ENCODE measurements at regions of chr12 and their contacts with region 1.

Region 1: DNA sequence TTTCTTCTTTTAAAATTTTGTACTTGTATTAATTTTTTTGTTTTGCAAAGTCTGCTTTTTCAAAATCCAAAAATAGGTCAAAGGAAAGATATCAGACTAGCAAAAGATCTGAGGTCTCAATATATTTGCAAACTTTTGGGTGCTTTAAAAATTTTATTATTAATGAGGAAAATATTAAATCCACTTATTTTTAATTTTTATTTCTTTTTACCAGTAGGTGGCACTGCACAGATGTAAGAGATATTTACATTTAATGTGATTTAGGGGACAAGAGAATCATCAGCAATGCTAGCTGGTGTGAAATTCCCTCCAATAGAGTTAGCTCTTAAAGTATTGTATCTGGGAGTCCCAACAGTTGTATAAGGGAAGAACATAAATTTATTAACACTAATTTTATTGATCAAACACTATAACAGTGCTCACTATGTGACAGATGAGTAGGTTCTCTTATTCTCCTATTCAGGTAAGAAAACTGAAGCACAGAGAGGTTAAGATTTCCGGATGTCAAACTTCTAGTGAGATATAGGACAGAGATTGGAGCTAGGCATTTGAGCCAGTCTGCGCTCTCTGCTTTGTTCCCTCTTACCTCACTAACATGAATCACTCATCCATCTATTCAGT is 30.5 kb downstream of the ALX1 start:
- DNase-seq: no peak
- H3K4me3 ChIP-seq: no peak overlapping the region
- H3K27me3 ChIP-seq: no peaks in the 10 kb centered on the region
- CTCF ChIP-seq: peak; percentile 32

Region 2: GRCh38 chr12:85155787-85156186 is 154.8 kb before region 1 on chr12:
- CTCF ChIA-PET with region 1: no interaction called
- POLR2A ChIA-PET with region 1: no interaction called
- DNase-seq: no peak
- H3K4me3 ChIP-seq: no peak overlapping the region
- H3K27me3 ChIP-seq: no peaks in the 10 kb centered on the region
- CTCF ChIP-seq: no peak

Region 3: GRCh38 chr12:85296362-85296761 is 14.2 kb before region 1 on chr12:
- CTCF ChIA-PET with region 1: interaction called, 10 read pairs
- POLR2A ChIA-PET with region 1: no interaction called
- DNase-seq: no peak
- H3K4me3 ChIP-seq: no peak overlapping the region
- H3K27me3 ChIP-seq: no peaks in the 10 kb centered on the region
- CTCF ChIP-seq: no peak

Region 4: GRCh38 chr12:85424581-85425348 is 114.2 kb after region 1 on chr12:
- CTCF ChIA-PET with region 1: no interaction called
- POLR2A ChIA-PET with region 1: no interaction called
- DNase-seq: no peak
- H3K4me3 ChIP-seq: no peak overlapping the region
- H3K27me3 ChIP-seq: no peaks in the 10 kb centered on the region
- CTCF ChIP-seq: peak; percentile 37

Region 5: GRCh38 chr12:85484387-85484786 is 173.8 kb after region 1 on chr12:
- CTCF ChIA-PET with region 1: no interaction called
- POLR2A ChIA-PET with region 1: no interaction called
- DNase-seq: no peak
- H3K4me3 ChIP-seq: no peak overlapping the region
- H3K27me3 ChIP-seq: no peaks in the 10 kb centered on the region
- CTCF ChIP-seq: no peak